ENCODE measurements at regions of chr3 and their contacts with region 1.

Region 1: GRCh38 chr3:9800525-9800924 is 7.6 kb downstream of the ARPC4 start:
- DNase-seq: no peak
- ATAC-seq: no peak
- H3K4me3 Mint-ChIP-seq: no peak overlapping the region
- H3K27ac Mint-ChIP-seq: no peak overlapping the region
- H3K4me1 Mint-ChIP-seq: peaks cover 23% of the 10 kb centered on the region
- H3K27me3 Mint-ChIP-seq: no peaks in the 10 kb centered on the region
- CTCF ChIP-seq: no peak

Region 2: GRCh38 chr3:9742560-9742959 is 58.0 kb before region 1 on chr3:
- CTCF ChIA-PET with region 1: no interaction called
- POLR2A ChIA-PET with region 1: interaction called, 12 read pairs
- intact Hi-C with region 1: no loop called
- DNase-seq: no peak
- ATAC-seq: no peak
- H3K4me3 Mint-ChIP-seq: no peak overlapping the region
- H3K27ac Mint-ChIP-seq: no peak overlapping the region
- H3K4me1 Mint-ChIP-seq: no peaks in the 10 kb centered on the region
- H3K27me3 Mint-ChIP-seq: no peaks in the 10 kb centered on the region
- CTCF ChIP-seq: no peak